Activated T-helper 2 cell treated with anti-CD3 and anti-CD28 coated beads, Interferon-gamma antibody, Interleukin-2, Interleukin-4, amounts not matched to agents 10 μg/mL and 5 μg/mL and 100 μg/mL, durations not matched to agents 14 hours and 24 hours and 36 hours (primary cell): ENCODE measurements at regions of chr1 and their contacts with region 1.

Region 1: GRCh38 chr1:202315576-202316168 is 26.1 kb downstream of the UBE2T start:
- DNase-seq: peak; percentile 63
- H3K4me3 Mint-ChIP-seq: no peak overlapping the region
- H3K27ac Mint-ChIP-seq: no peak overlapping the region
- H3K4me1 Mint-ChIP-seq: no peaks in the 10 kb centered on the region
- H3K27me3 Mint-ChIP-seq: peaks cover 17% of the 10 kb centered on the region

Region 2: DNA sequence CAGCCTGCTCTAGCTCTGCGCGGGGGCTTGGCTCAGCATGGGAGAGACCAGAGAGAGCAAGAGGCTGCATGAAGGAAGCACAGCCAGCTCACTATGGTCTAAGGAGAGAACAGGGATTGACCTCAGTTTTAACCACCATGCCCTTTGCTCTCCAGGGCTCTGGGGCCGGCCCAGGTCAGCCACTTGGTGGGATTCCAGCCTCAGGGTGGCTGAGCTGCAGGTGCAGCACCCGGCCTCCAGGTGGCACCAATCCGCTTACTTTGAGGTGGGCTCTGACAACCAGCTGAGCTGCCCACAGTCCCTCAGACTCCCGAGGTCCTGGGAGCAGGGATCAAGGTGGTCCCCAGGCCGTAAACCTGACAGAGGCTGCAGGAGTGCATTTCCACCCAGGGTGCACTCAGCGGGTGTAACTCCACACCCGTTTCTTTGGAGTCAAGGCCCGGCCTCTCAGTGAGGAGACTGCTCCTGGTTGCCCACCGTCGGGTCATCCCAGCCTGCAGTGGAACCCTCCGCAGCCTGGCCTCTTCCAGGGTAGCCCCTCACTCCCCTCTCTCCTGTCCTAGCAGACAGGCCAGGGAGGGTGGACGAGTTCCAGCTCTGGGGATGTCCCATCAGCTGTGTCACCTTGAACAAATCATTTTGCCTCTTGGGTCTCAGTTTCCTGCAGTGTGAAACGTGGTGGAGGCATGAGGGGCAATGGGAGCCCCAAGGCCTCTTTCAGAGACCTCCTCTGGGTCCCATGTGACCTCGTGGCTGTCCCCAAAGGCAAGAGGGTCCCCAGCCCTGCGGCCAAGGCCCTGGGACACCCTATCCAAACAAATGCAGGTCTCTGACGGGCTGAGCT is 122.7 kb before region 1 on chr1:
- intact Hi-C with region 1: loop called (anchors 1 kb)
- DNase-seq: peak; percentile 21
- H3K4me3 Mint-ChIP-seq: no peak overlapping the region
- H3K27ac Mint-ChIP-seq: no peak overlapping the region
- H3K4me1 Mint-ChIP-seq: no peaks in the 10 kb centered on the region
- H3K27me3 Mint-ChIP-seq: peaks cover 37% of the 10 kb centered on the region

Region 3: GRCh38 chr1:202274611-202275010 is 41.1 kb before region 1 on chr1:
- intact Hi-C with region 1: loop called (anchors 1 kb)
- DNase-seq: peak; percentile 21
- H3K4me3 Mint-ChIP-seq: no peak overlapping the region
- H3K27ac Mint-ChIP-seq: no peak overlapping the region
- H3K4me1 Mint-ChIP-seq: no peaks in the 10 kb centered on the region
- H3K27me3 Mint-ChIP-seq: peaks cover 14% of the 10 kb centered on the region

Region 4: DNA sequence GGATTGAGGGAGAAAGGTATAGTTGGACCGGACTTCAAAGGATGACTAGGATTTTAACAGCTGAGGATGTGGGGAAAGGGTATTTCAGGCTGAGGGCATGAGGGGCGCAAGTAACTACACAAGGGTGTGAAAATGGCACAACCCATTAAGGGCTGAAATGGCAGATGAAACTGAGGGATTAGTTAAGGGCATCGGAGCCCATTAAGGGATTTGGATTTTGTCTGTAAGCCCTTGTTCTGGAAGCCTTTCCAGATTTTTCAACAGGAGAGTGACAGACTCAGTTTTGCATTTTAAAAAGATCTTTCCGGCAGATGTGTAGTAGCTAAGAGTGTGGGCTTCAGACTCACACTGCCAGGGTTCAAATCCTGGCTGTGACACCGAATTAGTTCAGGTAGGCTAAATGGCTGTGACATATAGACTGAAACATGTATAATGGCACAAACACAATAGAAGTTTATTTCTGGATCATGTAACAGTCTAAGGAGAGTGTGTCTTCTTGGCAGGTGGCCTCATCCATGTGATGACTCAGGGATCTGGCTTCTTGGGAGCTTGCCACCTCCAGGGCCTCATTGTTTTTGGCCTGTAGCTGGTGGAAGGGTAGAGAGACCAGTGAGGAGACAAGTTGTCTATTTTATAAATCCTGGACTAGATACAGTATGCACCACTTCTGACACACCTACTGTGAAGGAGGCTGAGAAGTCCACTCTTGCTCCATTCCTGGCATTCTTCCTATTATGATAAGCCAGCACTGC is 23.5 kb before region 1 on chr1:
- intact Hi-C with region 1: no loop called
- DNase-seq: no peak
- H3K4me3 Mint-ChIP-seq: no peak overlapping the region
- H3K27ac Mint-ChIP-seq: no peak overlapping the region
- H3K4me1 Mint-ChIP-seq: peaks cover 19% of the 10 kb centered on the region
- H3K27me3 Mint-ChIP-seq: peaks cover 31% of the 10 kb centered on the region

Region 5: GRCh38 chr1:202348509-202349205 is 33.0 kb after region 1 on chr1 and contains the start of gene PPP1R12B:
- intact Hi-C with region 1: no loop called
- DNase-seq: peak; percentile 95
- H3K4me3 Mint-ChIP-seq: peak within 1 kb of the TSS; percentile 98
- H3K27ac Mint-ChIP-seq: peak within 1 kb of the TSS; percentile 94
- H3K4me1 Mint-ChIP-seq: peaks cover 25% of the 10 kb centered on the region
- H3K27me3 Mint-ChIP-seq: no peaks in the 10 kb centered on the region
- total RNA-seq, gene PPP1R12B: 13.5 and 15.4 TPM in 2 replicates